ENCODE measurements at regions of chr5 and their contacts with region 1.

Region 1: GRCh38 chr5:172714491-172715421 is 56.2 kb downstream of the DUSP1 start:
- DNase-seq: peak; percentile 81 to 86
- ATAC-seq: peak; percentile 66 to 80 (median 78)
- H3K4me3 ChIP-seq: no peak overlapping the region
- H3K27ac ChIP-seq: peak overlapping the region; percentile 62
- H3K4me1 ChIP-seq: no peaks in the 10 kb centered on the region
- H3K27me3 ChIP-seq: no peaks in the 10 kb centered on the region
- CTCF ChIP-seq: peak; percentile 76

Region 2: GRCh38 chr5:172458976-172459782 is 255.6 kb before region 1 on chr5:
- intact Hi-C with region 1: no loop called
- DNase-seq: no peak
- ATAC-seq: no peak
- H3K4me3 ChIP-seq: no peak overlapping the region
- H3K27ac ChIP-seq: no peak overlapping the region
- H3K4me1 ChIP-seq: no peaks in the 10 kb centered on the region
- H3K27me3 ChIP-seq: peaks cover 0 to 13% (median 4%) of the 10 kb centered on the region in 3 donors
- CTCF ChIP-seq: no peak

Region 3: DNA sequence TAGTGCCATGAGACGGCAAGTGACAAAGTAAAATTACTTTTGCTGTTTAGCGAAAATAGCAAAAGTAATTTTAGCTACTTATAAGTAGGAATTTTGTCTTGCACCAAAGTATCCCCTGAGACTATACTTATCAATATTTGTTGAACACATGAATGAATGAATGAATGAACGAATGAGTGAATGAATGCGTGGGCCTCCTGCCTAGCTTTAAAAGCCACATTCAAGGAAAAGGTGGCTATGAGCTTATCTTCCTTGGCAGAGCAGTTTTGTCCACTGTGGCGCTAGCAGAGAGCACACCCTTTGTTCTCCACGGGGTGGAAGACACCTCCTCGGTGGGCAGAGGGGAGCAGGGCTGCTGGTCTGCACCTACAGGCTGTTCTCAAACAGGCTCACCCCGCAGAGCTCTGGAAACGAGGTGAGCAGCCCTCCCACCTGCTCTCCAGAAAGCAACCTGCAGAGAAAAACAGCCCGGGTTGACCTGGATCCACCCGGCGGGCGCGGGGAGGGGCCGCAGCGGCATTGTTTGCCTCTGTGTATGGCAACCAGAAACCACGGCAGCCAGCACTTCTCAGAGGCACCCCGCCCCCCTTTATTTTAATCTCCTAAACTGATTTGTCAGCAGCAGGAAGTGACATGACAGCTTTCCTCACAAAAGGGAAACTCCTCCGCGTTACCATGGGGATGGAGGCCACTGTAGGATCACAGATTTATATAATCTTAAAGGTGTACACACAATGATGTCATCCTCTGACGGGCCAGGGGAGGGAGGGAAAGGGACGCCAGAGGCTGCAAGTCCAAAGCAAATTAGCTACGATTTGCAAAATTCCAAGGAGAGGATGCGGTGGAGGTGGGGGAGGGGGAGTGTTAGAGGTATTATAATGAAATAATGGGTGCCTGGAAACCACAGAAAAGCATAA is 50.4 kb after region 1 on chr5:
- intact Hi-C with region 1: loop called (anchors 2 to 5 kb)
- DNase-seq: peak; percentile 86 to 91
- ATAC-seq: peak; percentile 39 to 56 (median 50)
- H3K4me3 ChIP-seq: peak overlapping the region; percentile 79
- H3K27ac ChIP-seq: peak overlapping the region; percentile 98
- H3K4me1 ChIP-seq: peaks cover 21% of the 10 kb centered on the region
- H3K27me3 ChIP-seq: no peaks in the 10 kb centered on the region
- CTCF ChIP-seq: no peak